CD8-positive, alpha-beta T cell (primary cell): ENCODE measurements at regions of chr4 and their contacts with region 1.

Region 1: GRCh38 chr4:37686373-37687193 is at the start of gene RELL1:
- DNase-seq: peak; percentile 95 to 99 (median 98)
- ATAC-seq: peak; percentile 83
- H3K4me3 ChIP-seq: peak within 1 kb of the TSS; percentile 61 to 82
- H3K4me3 Mint-ChIP-seq: peak within 1 kb of the TSS; percentile 92
- H3K27ac ChIP-seq: peak within 1 kb of the TSS; percentile 84 to 92
- H3K27ac Mint-ChIP-seq: peak within 1 kb of the TSS; percentile 97
- H3K4me1 ChIP-seq: peaks cover 30% of the 10 kb centered on the region
- H3K4me1 Mint-ChIP-seq: peaks cover 41% of the 10 kb centered on the region
- H3K27me3 ChIP-seq: no peaks in the 10 kb centered on the region
- H3K27me3 Mint-ChIP-seq: no peaks in the 10 kb centered on the region
- CTCF ChIP-seq: no peak
- total RNA-seq, gene RELL1: 60.7 to 61.7 TPM

Region 2: GRCh38 chr4:37452952-37453280 is 233.7 kb before region 1 on chr4:
- CTCF ChIA-PET with region 1: interaction called, 3 read pairs
- POLR2A ChIA-PET with region 1: no interaction called
- intact Hi-C with region 1: loop called in 1 of 2 experiments (anchors 2 kb)
- DNase-seq: peak in 5 of 9 experiments; percentile 2 to 64 (median 28)
- ATAC-seq: peak; percentile 48
- H3K4me3 ChIP-seq: peak overlapping the region; percentile 38 to 49
- H3K4me3 Mint-ChIP-seq: peak overlapping the region; percentile 82
- H3K27ac ChIP-seq: no peak overlapping the region
- H3K27ac Mint-ChIP-seq: no peak overlapping the region
- H3K4me1 ChIP-seq: peaks cover 6% of the 10 kb centered on the region
- H3K4me1 Mint-ChIP-seq: peaks cover 16% of the 10 kb centered on the region
- H3K27me3 ChIP-seq: no peaks in the 10 kb centered on the region
- H3K27me3 Mint-ChIP-seq: peaks cover 44% of the 10 kb centered on the region
- CTCF ChIP-seq: peak; percentile 32

Region 3: DNA sequence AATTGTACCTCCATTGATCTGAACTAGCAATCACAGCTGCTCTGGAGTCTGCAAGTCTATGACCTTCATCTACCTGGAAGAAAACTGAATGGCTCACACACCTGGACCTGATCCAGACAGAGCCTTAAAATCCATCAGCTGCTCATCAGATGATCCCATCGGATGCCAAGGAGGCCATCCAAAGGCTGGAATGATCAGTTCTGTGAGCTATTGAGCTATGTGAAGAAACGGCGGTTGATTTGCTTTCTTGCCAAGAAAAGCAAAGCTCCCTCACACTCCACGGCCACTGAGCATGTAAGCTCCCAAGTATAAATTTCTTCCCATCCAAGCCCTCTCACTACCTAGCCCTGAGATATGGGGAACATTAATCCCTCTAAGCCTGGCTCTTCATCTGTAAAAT is 63.5 kb before region 1 on chr4:
- CTCF ChIA-PET with region 1: no interaction called
- POLR2A ChIA-PET with region 1: no interaction called
- intact Hi-C with region 1: no loop called
- DNase-seq: no peak
- ATAC-seq: no peak
- H3K4me3 ChIP-seq: no peak overlapping the region
- H3K4me3 Mint-ChIP-seq: no peak overlapping the region
- H3K27ac ChIP-seq: no peak overlapping the region
- H3K27ac Mint-ChIP-seq: no peak overlapping the region
- H3K4me1 ChIP-seq: no peaks in the 10 kb centered on the region
- H3K4me1 Mint-ChIP-seq: no peaks in the 10 kb centered on the region
- H3K27me3 ChIP-seq: no peaks in the 10 kb centered on the region
- H3K27me3 Mint-ChIP-seq: no peaks in the 10 kb centered on the region
- CTCF ChIP-seq: no peak

Region 4: GRCh38 chr4:37648096-37648817 is 38.3 kb before region 1 on chr4:
- CTCF ChIA-PET with region 1: no interaction called
- POLR2A ChIA-PET with region 1: no interaction called
- intact Hi-C with region 1: loop called in 1 of 2 experiments (anchors 5 kb)
- DNase-seq: no peak
- ATAC-seq: no peak
- H3K4me3 ChIP-seq: no peak overlapping the region
- H3K4me3 Mint-ChIP-seq: no peak overlapping the region
- H3K27ac ChIP-seq: no peak overlapping the region
- H3K27ac Mint-ChIP-seq: no peak overlapping the region
- H3K4me1 ChIP-seq: no peaks in the 10 kb centered on the region
- H3K4me1 Mint-ChIP-seq: peaks cover 18% of the 10 kb centered on the region
- H3K27me3 ChIP-seq: no peaks in the 10 kb centered on the region
- H3K27me3 Mint-ChIP-seq: no peaks in the 10 kb centered on the region
- CTCF ChIP-seq: no peak

Region 5: GRCh38 chr4:37891260-37892159 is 204.9 kb after region 1 on chr4:
- CTCF ChIA-PET with region 1: no interaction called
- POLR2A ChIA-PET with region 1: no interaction called
- intact Hi-C with region 1: loop called (anchors 2 to 5 kb)
- DNase-seq: peak; percentile 16 to 82 (median 51)
- ATAC-seq: peak; percentile 60
- H3K4me3 ChIP-seq: peak overlapping the region; percentile 60 to 80
- H3K4me3 Mint-ChIP-seq: peak overlapping the region; percentile 97
- H3K27ac ChIP-seq: peak overlapping the region; percentile 56 to 61
- H3K27ac Mint-ChIP-seq: peak overlapping the region; percentile 97
- H3K4me1 ChIP-seq: peaks cover 30% of the 10 kb centered on the region
- H3K4me1 Mint-ChIP-seq: peaks cover 44% of the 10 kb centered on the region
- H3K27me3 ChIP-seq: no peaks in the 10 kb centered on the region
- H3K27me3 Mint-ChIP-seq: no peaks in the 10 kb centered on the region
- CTCF ChIP-seq: no peak

Region 6: GRCh38 chr4:38663801-38664705 is 977.5 kb after region 1 on chr4 and contains the start of gene KLF3:
- CTCF ChIA-PET with region 1: no interaction called
- POLR2A ChIA-PET with region 1: no interaction called
- intact Hi-C with region 1: loop called in 1 of 2 experiments (anchors 10 kb)
- DNase-seq: peak; percentile 90 to 96 (median 93)
- ATAC-seq: peak; percentile 70
- H3K4me3 ChIP-seq: peak within 1 kb of the TSS; percentile 84 to 89
- H3K4me3 Mint-ChIP-seq: peak within 1 kb of the TSS; percentile 99
- H3K27ac ChIP-seq: peak within 1 kb of the TSS; percentile 90 to 93
- H3K27ac Mint-ChIP-seq: peak within 1 kb of the TSS; percentile 98
- H3K4me1 ChIP-seq: peaks cover 61% of the 10 kb centered on the region
- H3K4me1 Mint-ChIP-seq: peaks cover 69% of the 10 kb centered on the region
- H3K27me3 ChIP-seq: no peaks in the 10 kb centered on the region
- H3K27me3 Mint-ChIP-seq: no peaks in the 10 kb centered on the region
- CTCF ChIP-seq: no peak
- total RNA-seq, gene KLF3: 181 to 194 TPM

Region 7: GRCh38 chr4:39353478-39354253 is 1667.1 kb after region 1 on chr4:
- CTCF ChIA-PET with region 1: no interaction called
- POLR2A ChIA-PET with region 1: no interaction called
- intact Hi-C with region 1: loop called in 1 of 2 experiments (anchors 10 kb)
- DNase-seq: peak in 2 of 9 experiments; percentile 58 to 77
- ATAC-seq: peak; percentile 83
- H3K4me3 ChIP-seq: peak overlapping the region; percentile 40 to 44
- H3K4me3 Mint-ChIP-seq: peak overlapping the region; percentile 86
- H3K27ac ChIP-seq: peak overlapping the region; percentile 71 to 89
- H3K27ac Mint-ChIP-seq: peak overlapping the region; percentile 98
- H3K4me1 ChIP-seq: peaks cover 21% of the 10 kb centered on the region
- H3K4me1 Mint-ChIP-seq: peaks cover 63% of the 10 kb centered on the region
- H3K27me3 ChIP-seq: no peaks in the 10 kb centered on the region
- H3K27me3 Mint-ChIP-seq: no peaks in the 10 kb centered on the region
- CTCF ChIP-seq: no peak